AG04449 (cell line): ENCODE measurements at regions of chr3 and their contacts with region 1.

Region 1: DNA sequence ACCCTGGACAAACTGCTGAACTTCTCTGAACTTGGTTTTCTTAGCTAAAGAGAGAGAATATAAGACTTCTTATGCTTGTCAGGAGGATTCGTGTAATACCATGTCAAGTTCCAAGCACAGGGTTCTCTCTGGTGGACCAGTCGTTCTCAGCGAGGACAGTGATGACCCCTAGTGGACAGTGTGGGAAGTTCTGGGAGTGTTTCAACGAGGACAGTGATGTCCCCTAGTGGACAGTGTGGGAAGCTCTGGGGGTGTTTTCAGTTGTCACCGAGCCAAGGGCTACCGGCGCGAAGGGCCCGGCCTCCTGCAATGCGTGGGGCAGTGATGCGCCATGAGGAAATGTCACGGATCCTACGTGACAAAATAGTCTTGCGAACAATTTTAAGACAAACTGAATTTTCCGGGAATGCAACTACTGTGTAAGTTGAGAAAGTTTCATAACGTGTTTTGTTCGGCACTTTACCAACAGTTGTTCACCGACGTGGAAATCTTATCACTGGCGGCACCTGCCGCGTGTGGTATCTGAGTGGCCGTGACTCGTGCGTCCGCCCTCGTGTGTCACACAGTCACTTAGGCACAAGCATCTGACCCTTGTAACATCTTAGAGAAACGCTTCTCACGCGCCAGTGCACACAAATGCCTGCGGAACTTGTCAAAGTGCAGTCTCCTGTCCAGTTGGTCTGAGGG is 39.3 kb upstream of the MUC4 start:
- DNase-seq: peak; percentile 46
- H3K4me3 ChIP-seq: no peak overlapping the region
- CTCF ChIP-seq: peak; percentile 100

Region 2: DNA sequence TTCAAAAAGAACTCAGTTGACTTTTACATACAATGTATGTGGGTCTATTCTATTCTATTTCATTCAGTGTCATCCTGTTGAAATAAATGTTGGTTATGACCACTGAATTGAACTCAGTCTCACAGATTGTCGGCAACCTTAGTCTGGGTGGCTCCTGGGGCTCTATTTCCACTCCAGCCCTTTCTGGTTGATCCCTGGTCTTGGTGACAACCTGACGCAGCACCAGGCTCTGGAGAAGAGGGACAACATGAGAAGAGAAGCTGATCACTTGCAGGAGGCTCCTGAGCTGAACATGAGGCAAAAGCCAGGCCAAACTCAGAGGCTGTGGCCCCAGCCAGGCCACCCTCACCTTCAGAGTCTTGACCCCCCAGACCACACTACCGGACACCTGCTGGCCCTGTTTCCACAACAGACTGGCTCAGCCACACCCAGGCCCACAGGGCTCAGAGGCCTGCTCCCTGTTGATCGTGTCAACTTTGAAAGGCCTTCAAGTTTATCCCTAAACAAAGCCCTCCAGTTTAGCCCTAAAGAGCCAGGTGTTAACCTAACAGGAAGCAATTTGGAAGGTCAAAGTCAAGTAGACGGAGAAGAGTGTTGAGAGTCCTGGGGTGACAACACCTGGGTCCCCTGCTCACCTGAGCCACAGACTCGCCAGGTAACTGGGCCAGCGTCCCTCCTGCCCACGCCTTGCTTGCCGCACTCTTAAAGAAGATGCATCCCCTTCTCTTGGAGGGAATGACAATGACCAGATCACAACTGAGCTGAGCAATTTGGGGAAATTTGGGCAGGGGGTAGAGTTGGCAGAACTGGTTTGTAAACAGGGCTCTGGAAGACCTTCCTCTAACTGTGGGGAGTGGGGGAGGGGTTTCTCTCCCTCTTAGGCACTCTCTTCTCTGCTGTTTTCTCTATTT is 145.7 kb before region 1 on chr3:
- CTCF ChIA-PET with region 1: interaction called, 12 read pairs
- POLR2A ChIA-PET with region 1: no interaction called
- DNase-seq: no peak
- H3K4me3 ChIP-seq: no peak overlapping the region
- CTCF ChIP-seq: no peak

Region 3: GRCh38 chr3:195839282-195840010 is 11.6 kb before region 1 on chr3:
- CTCF ChIA-PET with region 1: interaction called, 46 read pairs
- POLR2A ChIA-PET with region 1: no interaction called
- DNase-seq: no peak
- H3K4me3 ChIP-seq: no peak overlapping the region
- CTCF ChIP-seq: no peak

Region 4: DNA sequence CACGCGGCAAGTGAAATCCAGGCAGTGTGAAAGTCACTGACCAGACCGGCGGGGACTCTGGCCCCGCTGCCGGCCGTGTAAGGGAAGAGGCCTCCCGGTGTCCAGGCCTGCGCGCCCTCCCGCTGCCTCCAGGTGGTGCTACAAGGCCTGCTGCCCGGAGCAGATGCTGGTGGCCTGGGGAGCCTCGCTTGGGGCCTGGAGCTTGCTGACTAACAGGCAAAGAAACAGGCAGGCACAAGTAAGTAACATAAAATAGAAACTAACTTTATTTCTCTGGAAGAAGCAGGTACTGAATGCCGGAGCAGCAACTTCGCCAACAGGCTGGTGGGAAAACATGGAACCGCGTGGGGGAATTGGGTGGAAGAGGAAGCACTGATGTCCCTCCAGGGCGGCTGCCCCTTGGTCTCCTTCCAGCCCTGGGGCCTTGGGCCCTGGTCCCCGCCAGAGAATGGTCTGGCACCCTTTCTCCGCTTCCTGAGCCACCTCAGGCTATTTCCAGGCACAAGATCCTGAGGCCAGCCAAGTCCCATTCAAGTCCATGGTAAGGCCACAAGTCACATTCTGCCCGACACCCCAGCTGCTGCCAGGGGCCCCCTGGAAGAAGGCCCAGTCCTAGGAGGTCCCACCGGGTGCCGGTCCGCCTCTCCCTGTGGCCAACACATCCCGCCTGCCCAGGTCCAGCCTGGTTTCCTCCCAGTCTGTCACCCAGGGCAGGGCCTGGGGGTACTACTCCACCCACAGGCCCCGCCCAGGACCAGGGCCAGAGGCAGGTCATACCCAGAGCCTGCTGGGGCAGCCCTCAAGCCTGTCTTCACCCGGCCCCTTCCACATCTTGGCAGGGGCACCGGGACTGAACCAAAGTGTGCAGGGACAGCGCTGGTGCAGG is 12.4 kb after region 1 on chr3:
- CTCF ChIA-PET with region 1: interaction called, 50 read pairs
- POLR2A ChIA-PET with region 1: interaction called, 3 read pairs
- DNase-seq: peak; percentile 40
- H3K4me3 ChIP-seq: no peak overlapping the region
- CTCF ChIP-seq: peak; percentile 99

Region 5: DNA sequence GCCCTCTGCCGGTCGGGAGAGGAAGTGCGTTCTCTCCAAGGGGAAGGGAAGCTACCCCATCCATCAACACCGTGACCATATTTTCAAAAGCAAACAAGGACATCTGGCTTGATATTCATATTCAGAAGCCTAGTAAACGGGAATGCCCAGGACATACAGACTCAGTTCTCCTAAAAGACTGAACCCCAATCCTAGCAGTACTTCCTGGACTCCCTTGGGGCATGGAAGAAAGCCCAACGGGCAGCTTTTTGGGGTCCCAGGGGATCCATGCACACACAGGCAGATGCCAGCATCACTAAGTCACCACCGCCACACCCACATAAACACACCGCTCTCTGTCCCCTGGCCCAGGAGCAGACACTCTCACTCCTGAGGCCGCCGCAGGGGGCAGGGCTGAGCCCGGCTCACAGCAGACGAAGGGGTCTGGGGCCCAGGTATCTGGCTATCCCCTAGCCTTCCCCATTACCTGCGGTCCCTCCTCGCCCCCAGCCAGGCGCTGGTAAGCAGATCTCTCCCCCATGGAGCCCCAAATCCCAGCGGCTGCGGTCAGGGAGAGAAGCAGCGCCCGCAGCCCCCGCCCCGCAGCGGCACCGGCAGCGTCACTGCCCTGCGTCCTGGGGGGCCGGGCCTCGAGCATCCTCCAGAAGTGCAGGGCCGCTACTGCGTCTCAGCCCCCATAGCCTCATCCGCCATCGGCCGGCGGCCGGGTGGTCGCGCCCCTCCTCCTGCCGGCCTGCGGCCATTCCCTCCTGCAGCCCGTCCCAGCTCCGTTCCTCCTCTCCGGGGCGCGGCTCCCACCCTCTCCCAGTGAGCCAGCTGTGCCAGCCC is 44.0 kb after region 1 on chr3:
- CTCF ChIA-PET with region 1: interaction called, 571 read pairs
- POLR2A ChIA-PET with region 1: no interaction called
- DNase-seq: no peak
- H3K4me3 ChIP-seq: peak overlapping the region; percentile 78
- CTCF ChIP-seq: peak; percentile 97